ENCODE measurements at regions of chr20 and their contacts with region 1.

Region 1: GRCh38 chr20:50165684-50166554 is 12.4 kb upstream of the PEDS1 start:
- DNase-seq: peak; percentile 93 to 98 (median 97)
- ATAC-seq: peak; percentile 99
- H3K4me3 ChIP-seq: no peak overlapping the region
- H3K4me1 ChIP-seq: peaks cover 9% of the 10 kb centered on the region
- CTCF ChIP-seq: no peak

Region 2: DNA sequence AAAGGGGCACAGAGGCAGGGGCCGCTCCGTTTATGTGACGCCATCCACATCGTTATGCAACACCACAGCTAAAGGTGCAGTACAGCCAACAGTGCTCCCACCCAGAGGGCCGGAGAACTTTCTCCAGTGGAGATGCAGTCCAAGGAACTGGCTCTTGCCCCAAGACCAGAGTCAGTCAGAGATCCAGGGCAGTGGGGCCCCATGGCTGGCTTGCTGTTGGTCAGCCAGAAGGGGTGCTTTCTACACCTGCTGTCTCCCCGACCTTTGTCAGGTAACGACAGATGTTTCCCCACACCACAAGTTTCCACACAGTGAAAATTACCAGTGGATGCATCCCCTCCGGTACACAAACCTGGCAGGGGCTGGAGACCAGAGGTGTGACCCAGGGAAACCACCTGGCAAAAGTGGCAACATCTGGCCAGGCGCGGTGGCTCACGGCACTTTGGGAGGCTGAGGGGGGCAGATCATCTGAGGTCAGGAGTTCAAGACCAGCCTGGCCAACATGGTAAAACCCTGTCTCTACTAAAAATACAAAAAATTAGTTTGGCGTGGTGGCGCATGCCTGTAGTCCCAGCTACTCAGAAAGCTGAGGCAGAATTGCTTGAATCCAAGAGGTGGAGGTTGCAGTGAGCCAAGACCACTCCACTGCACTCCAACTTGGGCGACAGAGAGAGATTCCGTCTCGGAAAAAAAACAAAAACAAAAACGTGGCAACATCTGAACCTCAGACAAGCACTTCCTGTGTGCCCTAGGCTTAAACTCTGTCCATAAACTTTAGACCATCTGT is 87.9 kb before region 1 on chr20:
- intact Hi-C with region 1: no loop called
- DNase-seq: peak in 1 of 3 donors; percentile 22
- ATAC-seq: no peak
- H3K4me3 ChIP-seq: no peak overlapping the region
- H3K4me1 ChIP-seq: no peaks in the 10 kb centered on the region
- CTCF ChIP-seq: no peak

Region 3: DNA sequence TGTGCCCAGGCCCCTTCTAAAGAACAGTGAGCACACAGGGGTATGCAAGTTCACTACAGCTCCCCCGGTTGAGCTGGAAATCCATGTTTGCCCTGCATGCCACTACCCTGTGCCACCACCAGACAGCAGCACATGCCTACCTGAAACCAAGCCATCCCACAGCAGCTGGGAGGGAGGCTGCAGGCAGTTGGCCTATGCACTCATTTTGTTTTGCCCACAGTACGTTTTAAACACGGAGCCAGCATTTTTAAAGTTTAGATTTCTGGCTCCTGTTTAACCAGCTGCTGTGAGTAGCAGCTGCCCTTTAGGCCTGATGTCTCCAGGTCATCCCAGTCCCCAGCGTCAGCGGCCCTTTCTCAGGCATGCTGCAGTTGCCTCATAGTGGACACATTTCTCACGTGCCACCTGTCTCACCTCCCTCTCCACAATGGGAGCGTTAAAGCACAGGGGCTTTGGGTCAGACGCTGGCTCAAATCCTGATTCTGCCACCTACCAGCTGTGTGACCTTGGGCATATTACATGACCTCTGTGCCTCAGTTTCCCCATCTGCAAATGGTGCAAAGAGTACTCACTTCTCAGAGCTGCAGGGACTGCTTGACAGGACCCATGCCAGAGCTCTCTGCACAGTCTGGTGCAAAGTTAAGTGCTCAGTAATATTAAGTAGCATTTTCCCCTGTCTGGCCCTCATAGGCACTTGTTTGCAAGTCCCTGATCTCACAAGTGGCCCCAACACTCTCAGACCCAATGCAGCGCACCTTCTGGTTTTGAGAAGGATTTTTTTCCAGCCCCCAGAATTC is 44.8 kb before region 1 on chr20:
- intact Hi-C with region 1: loop called (anchors 2 to 5 kb)
- DNase-seq: peak in 2 of 3 donors; percentile 77 to 81
- ATAC-seq: peak; percentile 88
- H3K4me3 ChIP-seq: no peak overlapping the region
- H3K4me1 ChIP-seq: peaks cover 8% of the 10 kb centered on the region
- CTCF ChIP-seq: peak; percentile 71

Region 4: GRCh38 chr20:50237349-50238085 is 71.6 kb after region 1 on chr20:
- intact Hi-C with region 1: no loop called
- DNase-seq: no peak
- ATAC-seq: peak; percentile 61
- H3K4me3 ChIP-seq: no peak overlapping the region
- H3K4me1 ChIP-seq: no peaks in the 10 kb centered on the region
- CTCF ChIP-seq: no peak

Measured in mucosa of descending colon (tissue), 3 donors.